PC-3 (cell line): ENCODE measurements at regions of chr5 and their contacts with region 1.

Region 1: DNA sequence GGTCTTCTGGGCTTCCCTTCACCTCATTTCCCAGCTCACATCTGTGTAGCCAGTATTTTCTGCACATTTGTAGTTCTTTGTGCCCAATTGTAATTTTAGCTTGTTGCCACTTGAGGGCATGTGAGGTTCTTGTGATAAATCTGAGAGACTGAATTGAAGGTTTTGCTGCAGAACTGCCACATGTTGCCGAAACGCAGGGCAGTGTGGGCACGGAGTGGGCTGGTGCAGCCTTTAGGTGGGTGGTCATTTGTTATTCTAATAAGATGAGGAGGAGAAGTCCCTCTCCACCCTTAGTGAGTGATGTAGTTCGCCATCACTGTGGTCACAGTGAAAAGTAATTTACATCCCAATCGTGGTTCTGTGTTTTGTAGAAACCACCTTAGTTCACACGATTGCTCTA is 21.2 kb downstream of the OTULIN start:
- DNase-seq: peak; percentile 79
- ATAC-seq: peak; percentile 77
- H3K4me3 ChIP-seq: no peak overlapping the region
- H3K27ac ChIP-seq: no peak overlapping the region
- H3K4me1 ChIP-seq: peaks cover 9% of the 10 kb centered on the region; the same call in 1 of the 2 replicates
- H3K27me3 ChIP-seq: no peaks in the 10 kb centered on the region
- CTCF ChIP-seq: peak; percentile 89

Region 2: DNA sequence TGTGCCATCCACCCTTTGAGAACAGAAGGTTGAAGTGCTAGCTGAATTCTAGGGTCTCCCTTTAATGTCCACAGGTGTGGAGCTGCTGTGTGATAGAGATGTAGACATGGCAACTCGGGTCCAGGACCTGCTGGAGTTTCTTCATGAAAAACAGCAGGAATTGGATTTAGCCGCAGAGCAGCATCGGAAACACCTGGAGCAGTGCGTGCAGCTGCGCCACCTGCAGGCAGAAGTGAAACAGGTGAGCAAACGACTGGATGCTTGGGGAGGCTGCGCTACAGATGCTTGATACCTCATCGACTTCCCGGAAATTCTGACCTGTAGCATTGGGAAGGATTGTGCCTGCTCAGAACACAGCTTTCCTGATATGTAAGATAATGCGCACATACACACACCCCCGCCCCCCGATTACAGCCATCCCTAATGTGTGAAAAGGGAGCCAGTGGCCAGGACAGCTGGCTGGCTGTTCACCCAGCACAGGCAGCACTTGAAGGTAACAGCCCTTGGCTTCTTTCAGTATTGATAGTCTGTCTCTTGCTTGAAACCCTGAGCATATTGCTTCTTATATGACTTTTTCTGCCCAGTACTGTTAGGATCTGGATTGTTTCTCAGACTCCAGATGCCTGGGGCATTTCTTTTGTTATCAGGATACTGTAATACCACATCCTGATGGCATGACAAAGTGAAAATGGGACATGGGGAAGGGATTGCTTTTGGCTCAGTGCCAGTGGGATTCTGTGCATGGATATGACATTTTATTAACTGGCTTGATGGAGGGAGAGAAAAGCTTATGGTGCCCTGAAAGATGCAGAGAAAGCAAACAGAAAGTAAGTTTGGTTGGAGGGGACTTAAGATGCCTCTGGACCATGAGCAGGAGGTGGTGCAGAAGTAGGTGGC is 320.9 kb before region 1 on chr5:
- CTCF ChIA-PET with region 1: no interaction called
- POLR2A ChIA-PET with region 1: no interaction called
- intact Hi-C with region 1: loop called (anchors 1 kb)
- DNase-seq: peak; percentile 64
- ATAC-seq: peak; percentile 39; the same call in 1 of the 2 replicates
- H3K4me3 ChIP-seq: no peak overlapping the region
- H3K27ac ChIP-seq: no peak overlapping the region
- H3K4me1 ChIP-seq: peaks cover 20% of the 10 kb centered on the region
- H3K27me3 ChIP-seq: no peaks in the 10 kb centered on the region
- CTCF ChIP-seq: peak; percentile 91

Region 3: DNA sequence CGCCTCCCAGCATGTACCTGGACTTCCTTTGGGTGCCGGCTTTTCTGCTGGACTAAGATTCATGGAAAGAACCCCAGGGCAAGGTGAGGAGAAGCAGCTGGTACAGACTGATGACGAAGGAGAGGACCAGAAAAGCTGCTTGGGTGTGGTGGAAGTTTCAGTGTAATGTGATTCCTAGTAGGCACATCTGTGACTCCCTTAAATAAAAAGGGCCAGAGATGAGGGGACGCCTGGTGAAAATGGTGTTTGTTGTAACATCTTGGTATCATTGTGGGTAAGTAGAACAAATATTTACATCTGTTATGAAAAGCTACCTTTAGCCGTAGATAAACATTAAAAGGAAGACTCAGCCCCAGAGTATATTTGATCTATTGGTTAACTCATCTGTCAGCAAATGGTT is 70.4 kb before region 1 on chr5:
- CTCF ChIA-PET with region 1: no interaction called
- POLR2A ChIA-PET with region 1: no interaction called
- intact Hi-C with region 1: no loop called
- DNase-seq: peak; percentile 66
- ATAC-seq: peak; percentile 79
- H3K4me3 ChIP-seq: no peak overlapping the region
- H3K27ac ChIP-seq: peak overlapping the region; percentile 58
- H3K4me1 ChIP-seq: peaks cover 12% of the 10 kb centered on the region
- H3K27me3 ChIP-seq: no peaks in the 10 kb centered on the region
- CTCF ChIP-seq: no peak

Region 4: GRCh38 chr5:14890846-14891245 is 205.1 kb after region 1 on chr5:
- CTCF ChIA-PET with region 1: no interaction called
- POLR2A ChIA-PET with region 1: no interaction called
- intact Hi-C with region 1: no loop called
- DNase-seq: no peak
- ATAC-seq: no peak
- H3K4me3 ChIP-seq: no peak overlapping the region
- H3K27ac ChIP-seq: no peak overlapping the region
- H3K4me1 ChIP-seq: no peaks in the 10 kb centered on the region
- H3K27me3 ChIP-seq: peaks cover 6% of the 10 kb centered on the region; the same call in 1 of the 2 replicates
- CTCF ChIP-seq: no peak

Region 5: DNA sequence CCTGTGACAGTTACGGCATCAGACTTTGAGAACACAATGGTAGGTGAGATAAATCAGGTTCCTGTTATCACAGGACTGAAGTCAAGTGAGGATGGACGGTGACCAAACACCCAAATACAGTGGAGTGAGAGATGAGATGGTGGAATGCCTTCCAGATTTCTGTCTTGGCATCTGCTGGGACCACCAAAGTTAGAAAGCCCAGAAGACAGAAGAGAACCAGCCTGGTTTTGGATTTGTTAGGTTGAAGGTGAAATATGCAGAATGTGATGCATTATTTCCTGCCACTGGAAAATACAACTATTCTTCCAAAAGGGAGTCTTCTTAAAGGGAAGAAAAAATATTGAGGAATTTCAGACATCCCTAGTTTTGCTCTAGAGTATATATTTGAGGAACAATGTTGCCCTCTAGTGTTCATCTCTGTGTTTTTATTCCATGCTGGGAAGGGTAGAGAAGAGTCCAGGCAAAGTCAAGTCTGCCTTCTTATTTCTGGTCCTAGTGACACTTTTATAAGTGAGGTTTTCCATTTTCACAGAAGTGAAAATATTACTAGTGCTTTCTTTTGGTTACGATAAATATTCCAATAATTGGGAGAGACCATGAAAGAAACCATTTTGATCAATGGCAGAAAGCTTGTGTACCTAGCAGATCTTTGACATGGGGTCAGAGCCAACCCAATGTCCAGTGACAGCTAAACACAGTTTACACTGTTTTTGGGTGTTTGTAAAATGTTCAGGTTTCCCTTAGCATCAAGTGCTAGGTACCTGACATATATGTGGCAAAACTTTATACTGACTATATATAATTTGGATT is 328.1 kb after region 1 on chr5:
- CTCF ChIA-PET with region 1: no interaction called
- POLR2A ChIA-PET with region 1: no interaction called
- intact Hi-C with region 1: loop called (anchors 1 kb)
- DNase-seq: peak; percentile 93
- ATAC-seq: peak; percentile 80
- H3K4me3 ChIP-seq: no peak overlapping the region
- H3K27ac ChIP-seq: no peak overlapping the region
- H3K4me1 ChIP-seq: peaks cover 10% of the 10 kb centered on the region
- H3K27me3 ChIP-seq: no peaks in the 10 kb centered on the region
- CTCF ChIP-seq: peak; percentile 89